ENCODE measurements at regions of chr20 and their contacts with region 1.

Region 1: DNA sequence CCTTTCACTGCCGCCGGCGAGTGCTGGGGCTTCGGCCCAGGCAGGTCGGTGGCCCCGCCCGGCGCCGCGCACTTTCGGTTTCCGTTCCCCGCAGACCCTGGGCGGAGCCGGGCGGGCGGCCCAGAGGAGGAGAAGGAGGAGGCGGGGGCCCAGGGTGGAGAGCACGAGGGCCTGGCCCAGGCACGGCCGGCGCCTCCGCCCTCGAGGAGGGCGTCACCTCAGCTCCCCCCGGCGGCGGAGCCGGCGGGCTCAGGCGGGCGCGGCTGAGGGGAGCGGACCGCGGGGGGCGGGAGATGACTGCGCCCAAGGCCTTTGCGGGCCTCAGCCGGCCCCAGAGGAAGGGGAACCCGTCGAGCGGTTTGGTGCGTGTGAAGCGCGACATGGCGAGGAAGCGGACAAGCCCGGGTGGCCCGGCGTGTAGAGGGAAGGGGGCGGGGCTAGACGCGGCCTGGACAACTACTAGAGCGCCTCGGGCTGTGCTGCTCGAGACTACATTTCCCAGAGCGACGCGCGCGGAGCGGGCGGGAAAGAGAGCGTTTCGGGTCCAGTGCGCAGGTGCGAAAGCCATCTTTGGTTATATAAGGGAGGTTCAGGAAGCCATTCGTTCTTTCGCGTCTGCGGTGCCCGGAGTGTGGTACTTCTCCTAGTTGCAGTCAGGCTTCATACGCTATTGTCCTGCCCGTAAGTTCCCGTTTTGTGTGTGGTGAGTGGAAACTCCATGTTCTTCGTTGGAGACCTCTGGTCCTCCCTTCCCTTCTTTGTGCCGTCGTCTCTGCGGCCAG is at the start of gene ZNFX1:
- DNase-seq: peak; percentile 96 to 99 (median 99)
- ATAC-seq: peak; percentile 83
- H3K4me3 ChIP-seq: peak within 1 kb of the TSS; percentile 71 to 84
- H3K4me3 Mint-ChIP-seq: peak within 1 kb of the TSS; percentile 96
- H3K27ac ChIP-seq: peak within 1 kb of the TSS; percentile 84 to 89
- H3K27ac Mint-ChIP-seq: peak within 1 kb of the TSS; percentile 99
- H3K4me1 ChIP-seq: peaks cover 66% of the 10 kb centered on the region
- H3K4me1 Mint-ChIP-seq: peaks cover 67% of the 10 kb centered on the region
- H3K27me3 ChIP-seq: no peaks in the 10 kb centered on the region
- H3K27me3 Mint-ChIP-seq: no peaks in the 10 kb centered on the region
- CTCF ChIP-seq: no peak
- total RNA-seq, gene ZNFX1: 53.8 to 55.0 TPM

Region 2: DNA sequence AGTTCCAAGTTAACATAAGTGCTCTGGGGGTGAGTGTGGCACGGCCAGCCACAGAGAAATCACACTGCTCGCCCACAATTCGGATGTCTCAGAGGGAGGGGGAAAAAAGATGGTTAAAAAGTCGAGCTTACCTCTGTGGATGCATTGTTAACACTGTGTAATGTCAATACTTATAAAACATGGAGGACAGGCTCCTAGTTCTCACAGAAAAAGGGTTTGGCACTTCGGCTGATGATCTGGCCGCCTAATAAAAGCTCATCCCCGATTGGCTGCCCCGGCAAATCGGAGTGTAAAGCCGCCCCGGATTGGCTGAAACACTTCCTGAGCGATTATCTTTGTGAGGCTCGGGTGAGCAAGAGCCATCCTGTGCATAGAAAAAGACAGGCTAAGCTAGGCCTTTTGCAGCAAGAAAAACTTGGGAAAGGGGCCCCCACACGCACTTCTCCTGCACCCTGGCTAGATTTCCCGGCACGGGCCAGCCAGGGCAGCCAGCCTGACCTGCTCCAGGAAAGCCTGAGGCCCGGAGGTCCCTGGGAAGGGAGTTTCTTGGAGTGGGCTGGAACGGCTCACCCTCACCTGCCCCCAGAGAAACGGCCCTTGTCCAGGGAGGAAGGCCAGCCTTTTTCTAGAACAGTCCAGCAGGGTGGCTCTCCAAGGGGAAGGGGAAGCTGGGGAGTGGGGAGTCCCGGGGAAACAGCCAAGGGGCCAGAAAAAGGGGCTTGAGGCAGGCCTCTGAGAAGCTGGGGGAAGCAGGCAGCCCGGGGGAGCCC is 1921.5 kb before region 1 on chr20 and contains the start of gene ZMYND8:
- CTCF ChIA-PET with region 1: no interaction called
- POLR2A ChIA-PET with region 1: no interaction called
- intact Hi-C with region 1: loop called in 1 of 2 experiments (anchors 10 kb)
- DNase-seq: peak; percentile 90 to 100 (median 95)
- ATAC-seq: peak; percentile 90
- H3K4me3 ChIP-seq: peak within 1 kb of the TSS; percentile 53 to 55
- H3K4me3 Mint-ChIP-seq: peak within 1 kb of the TSS; percentile 82
- H3K27ac ChIP-seq: peak within 1 kb of the TSS; percentile 75 to 76
- H3K27ac Mint-ChIP-seq: peak within 1 kb of the TSS; percentile 100
- H3K4me1 ChIP-seq: peaks cover 70% of the 10 kb centered on the region
- H3K4me1 Mint-ChIP-seq: peaks cover 38% of the 10 kb centered on the region
- H3K27me3 ChIP-seq: no peaks in the 10 kb centered on the region
- H3K27me3 Mint-ChIP-seq: no peaks in the 10 kb centered on the region
- CTCF ChIP-seq: no peak
- total RNA-seq, gene ZMYND8: 23.2 to 27.0 TPM

Region 3: GRCh38 chr20:48866502-48867335 is 411.5 kb before region 1 on chr20:
- CTCF ChIA-PET with region 1: no interaction called
- POLR2A ChIA-PET with region 1: no interaction called
- intact Hi-C with region 1: no loop called
- DNase-seq: no peak
- ATAC-seq: no peak
- H3K4me3 ChIP-seq: no peak overlapping the region
- H3K4me3 Mint-ChIP-seq: no peak overlapping the region
- H3K27ac ChIP-seq: no peak overlapping the region
- H3K27ac Mint-ChIP-seq: no peak overlapping the region
- H3K4me1 ChIP-seq: no peaks in the 10 kb centered on the region
- H3K4me1 Mint-ChIP-seq: peaks cover 2% of the 10 kb centered on the region
- H3K27me3 ChIP-seq: no peaks in the 10 kb centered on the region
- H3K27me3 Mint-ChIP-seq: no peaks in the 10 kb centered on the region
- CTCF ChIP-seq: no peak

Region 4: GRCh38 chr20:49046087-49046900 is 231.9 kb before region 1 on chr20 and contains the start of gene CSE1L:
- CTCF ChIA-PET with region 1: no interaction called
- POLR2A ChIA-PET with region 1: interaction called, 4 read pairs
- intact Hi-C with region 1: loop called (anchors 1 kb)
- DNase-seq: peak; percentile 86 to 98 (median 95)
- ATAC-seq: peak; percentile 89
- H3K4me3 ChIP-seq: peak within 1 kb of the TSS; percentile 81 to 96
- H3K4me3 Mint-ChIP-seq: peak within 1 kb of the TSS; percentile 98
- H3K27ac ChIP-seq: peak within 1 kb of the TSS; percentile 85 to 90
- H3K27ac Mint-ChIP-seq: peak within 1 kb of the TSS; percentile 97
- H3K4me1 ChIP-seq: peaks cover 27% of the 10 kb centered on the region
- H3K4me1 Mint-ChIP-seq: peaks cover 34% of the 10 kb centered on the region
- H3K27me3 ChIP-seq: no peaks in the 10 kb centered on the region
- H3K27me3 Mint-ChIP-seq: no peaks in the 10 kb centered on the region
- CTCF ChIP-seq: no peak
- total RNA-seq, gene CSE1L: 31.8 to 33.4 TPM

Region 5: GRCh38 chr20:49219089-49219923 is 58.9 kb before region 1 on chr20 and contains the start of gene DDX27:
- CTCF ChIA-PET with region 1: interaction called, 4 read pairs
- POLR2A ChIA-PET with region 1: no interaction called
- intact Hi-C with region 1: loop called (anchors 1 kb)
- DNase-seq: peak; percentile 92 to 99 (median 96)
- ATAC-seq: peak; percentile 79
- H3K4me3 ChIP-seq: peak within 1 kb of the TSS; percentile 90 to 99
- H3K4me3 Mint-ChIP-seq: peak within 1 kb of the TSS; percentile 91
- H3K27ac ChIP-seq: peak within 1 kb of the TSS; percentile 91 to 95
- H3K27ac Mint-ChIP-seq: peak within 1 kb of the TSS; percentile 96
- H3K4me1 ChIP-seq: peaks cover 13% of the 10 kb centered on the region
- H3K4me1 Mint-ChIP-seq: peaks cover 30% of the 10 kb centered on the region
- H3K27me3 ChIP-seq: no peaks in the 10 kb centered on the region
- H3K27me3 Mint-ChIP-seq: no peaks in the 10 kb centered on the region
- CTCF ChIP-seq: no peak
- total RNA-seq, gene DDX27: 129 to 141 TPM

Region 6: DNA sequence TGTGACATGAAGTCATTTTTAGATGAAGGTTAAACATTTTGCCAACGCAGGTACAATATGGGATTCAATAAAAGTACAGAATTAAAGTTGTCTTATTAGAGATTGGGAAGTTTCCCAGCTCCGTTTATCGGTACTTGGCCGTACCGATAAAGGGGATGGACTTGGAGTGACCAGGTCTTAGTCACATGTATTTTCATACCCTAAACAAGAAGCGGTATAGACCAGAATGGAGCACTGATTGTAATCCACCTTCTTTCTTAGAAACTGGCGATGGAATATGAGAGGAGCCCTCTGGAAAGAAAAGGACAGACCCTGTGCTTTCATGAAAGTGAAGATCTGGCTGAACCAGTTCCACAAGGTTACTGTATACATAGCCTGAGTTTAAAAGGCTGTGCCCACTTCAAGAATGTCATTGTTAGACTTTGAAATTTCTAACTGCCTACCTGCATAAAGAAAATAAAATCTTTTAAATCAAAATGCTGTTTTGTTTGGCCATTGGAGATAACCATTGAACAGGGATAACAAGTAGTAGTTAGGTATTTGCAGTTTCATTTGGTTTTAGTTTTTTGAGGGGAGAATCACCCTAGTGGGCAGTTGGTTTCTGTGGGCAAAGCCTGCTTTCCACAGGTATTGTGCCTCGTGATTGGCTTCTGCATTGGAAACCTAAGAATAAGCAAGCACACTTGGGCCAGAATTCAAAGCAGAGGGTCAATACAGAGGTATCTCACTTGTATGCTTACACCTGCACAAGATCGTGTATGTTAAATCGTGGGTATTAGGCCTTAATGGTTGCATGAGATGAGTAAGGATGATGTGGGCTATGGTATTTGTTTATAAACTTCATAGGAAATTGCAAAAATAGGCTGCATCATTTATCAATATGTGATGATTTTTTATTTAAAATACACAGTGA is 10.8 kb after region 1 on chr20:
- CTCF ChIA-PET with region 1: interaction called, 10 read pairs
- POLR2A ChIA-PET with region 1: interaction called, 35 read pairs
- intact Hi-C with region 1: no loop called
- DNase-seq: no peak
- ATAC-seq: no peak
- H3K4me3 ChIP-seq: no peak overlapping the region
- H3K4me3 Mint-ChIP-seq: no peak overlapping the region
- H3K27ac ChIP-seq: no peak overlapping the region
- H3K27ac Mint-ChIP-seq: no peak overlapping the region
- H3K4me1 ChIP-seq: peaks cover 3% of the 10 kb centered on the region
- H3K4me1 Mint-ChIP-seq: peaks cover 11% of the 10 kb centered on the region
- H3K27me3 ChIP-seq: no peaks in the 10 kb centered on the region
- H3K27me3 Mint-ChIP-seq: no peaks in the 10 kb centered on the region
- CTCF ChIP-seq: no peak

Region 7: GRCh38 chr20:49323622-49324238 is 45.5 kb after region 1 on chr20:
- CTCF ChIA-PET with region 1: interaction called, 3 read pairs
- POLR2A ChIA-PET with region 1: interaction called, 8 read pairs
- intact Hi-C with region 1: loop called in 1 of 2 experiments (anchors 2 kb)
- DNase-seq: peak in 7 of 9 experiments; percentile 7 to 75 (median 33)
- ATAC-seq: peak; percentile 83
- H3K4me3 ChIP-seq: no peak overlapping the region
- H3K4me3 Mint-ChIP-seq: no peak overlapping the region
- H3K27ac ChIP-seq: peak overlapping the region in 1 of 2 experiments; percentile 43
- H3K27ac Mint-ChIP-seq: no peak overlapping the region
- H3K4me1 ChIP-seq: peaks cover 14% of the 10 kb centered on the region
- H3K4me1 Mint-ChIP-seq: peaks cover 28% of the 10 kb centered on the region
- H3K27me3 ChIP-seq: peaks cover 7 to 8% of the 10 kb centered on the region in 2 experiments
- H3K27me3 Mint-ChIP-seq: peaks cover 28% of the 10 kb centered on the region
- CTCF ChIP-seq: peak; percentile 33